ENCODE measurements at regions of chr6 and their contacts with region 1.

Region 1: DNA sequence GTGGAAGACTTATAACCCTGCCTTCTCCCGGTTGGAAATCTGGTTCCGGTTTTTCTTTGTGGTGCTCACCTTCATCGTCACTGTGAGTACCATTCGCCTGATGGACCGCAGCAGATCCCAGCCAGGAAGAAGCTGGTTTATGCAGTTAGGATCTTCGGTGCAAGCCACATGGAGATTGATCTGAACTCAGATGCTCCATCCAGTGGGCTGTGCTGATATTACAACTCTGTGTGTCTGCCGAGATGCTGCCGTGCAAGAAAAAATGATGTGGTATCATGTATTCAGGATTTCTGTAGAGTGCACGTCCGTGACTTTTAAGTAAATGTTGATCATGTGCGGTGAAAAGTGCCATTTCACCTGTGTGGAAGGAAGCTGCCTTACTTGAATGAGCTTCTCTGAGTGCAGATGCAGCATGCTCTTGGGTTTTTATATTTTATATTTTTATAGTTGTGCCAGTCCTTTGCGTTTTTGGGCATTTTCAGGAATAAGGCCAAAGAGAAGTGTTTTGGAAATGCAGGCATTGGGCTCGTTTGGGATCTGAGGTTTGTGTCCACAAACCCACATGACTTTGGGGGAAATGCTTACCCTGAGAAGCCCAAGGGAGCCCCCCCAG is 39.2 kb downstream of the DYNLT1 start:
- DNase-seq: no peak
- H3K4me3 ChIP-seq: no peak overlapping the region
- H3K27ac ChIP-seq: no peak overlapping the region
- H3K4me1 ChIP-seq: no peaks in the 10 kb centered on the region
- H3K27me3 ChIP-seq: no peaks in the 10 kb centered on the region
- CTCF ChIP-seq: peak; percentile 37 to 86 (median 72)
- POLR2A ChIP-seq: no peak

Region 2: DNA sequence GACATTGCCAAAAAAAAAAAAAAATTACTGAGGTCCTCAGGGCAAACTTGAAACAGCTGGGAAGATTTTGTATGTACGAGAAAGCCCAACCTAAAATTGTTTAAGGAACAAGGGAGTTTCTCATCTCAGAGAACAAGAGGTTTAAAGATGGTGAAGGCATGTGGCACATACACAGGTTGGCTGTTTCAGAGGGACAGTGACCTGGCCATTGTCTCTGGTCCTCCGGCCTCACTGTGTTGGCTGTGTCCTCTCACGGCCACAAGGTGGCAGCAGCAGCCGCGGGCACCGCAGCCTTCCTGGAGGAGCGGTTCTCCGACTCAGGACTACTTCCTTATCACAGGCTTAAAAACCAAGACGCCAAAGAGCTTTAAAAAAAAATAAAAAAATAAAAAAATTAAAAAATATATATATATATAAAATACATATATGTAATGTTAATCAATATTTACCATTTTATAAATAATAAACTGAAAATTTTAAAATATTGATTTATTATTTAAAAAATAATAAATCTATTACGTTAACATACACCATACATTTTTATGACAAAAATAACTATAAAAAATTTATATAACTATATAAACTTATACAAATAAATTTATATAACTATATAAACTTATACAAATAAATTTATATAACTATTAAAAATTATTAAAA is 384.5 kb before region 1 on chr6:
- intact Hi-C with region 1: loop called (anchors 10 kb)
- DNase-seq: peak; percentile 3
- H3K4me3 ChIP-seq: no peak overlapping the region
- H3K27ac ChIP-seq: no peak overlapping the region
- H3K4me1 ChIP-seq: no peaks in the 10 kb centered on the region
- H3K27me3 ChIP-seq: no peaks in the 10 kb centered on the region
- CTCF ChIP-seq: peak; percentile 83 to 96 (median 94)
- POLR2A ChIP-seq: no peak

Region 3: DNA sequence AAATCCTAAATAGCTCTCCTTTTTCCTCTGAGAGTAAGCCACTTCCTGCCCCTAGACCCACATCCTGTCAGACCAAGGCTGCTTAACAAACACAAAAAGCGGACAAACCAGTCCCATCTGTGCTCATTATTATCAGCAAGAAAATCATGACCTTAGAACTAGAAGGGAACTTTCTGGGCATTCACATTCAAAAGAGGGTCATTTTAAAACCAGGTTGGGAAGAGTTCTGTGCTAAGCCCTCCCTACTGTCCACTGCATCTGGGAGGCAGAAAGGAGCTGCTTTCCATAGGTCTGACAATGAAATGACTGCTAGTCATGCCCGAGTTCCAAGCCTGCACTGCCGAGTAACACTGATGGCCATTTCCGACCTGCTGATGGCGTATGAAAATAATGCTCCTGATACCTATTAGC is 198.4 kb after region 1 on chr6:
- intact Hi-C with region 1: no loop called
- DNase-seq: no peak
- H3K4me3 ChIP-seq: peak overlapping the region in 1 of 4 donors; percentile 30
- H3K27ac ChIP-seq: peak overlapping the region in 3 of 4 donors; percentile 68 to 75 (median 68)
- H3K4me1 ChIP-seq: peaks cover 14 to 97% (median 39%) of the 10 kb centered on the region in 3 donors
- H3K27me3 ChIP-seq: no peaks in the 10 kb centered on the region
- CTCF ChIP-seq: no peak
- POLR2A ChIP-seq: peak in 1 of 4 donors; percentile 18

Measured in esophagus squamous epithelium (tissue), 5 donors.